OCI-LY7 (cell line): ENCODE measurements at regions of chr4 and their contacts with region 1.

Region 1: DNA sequence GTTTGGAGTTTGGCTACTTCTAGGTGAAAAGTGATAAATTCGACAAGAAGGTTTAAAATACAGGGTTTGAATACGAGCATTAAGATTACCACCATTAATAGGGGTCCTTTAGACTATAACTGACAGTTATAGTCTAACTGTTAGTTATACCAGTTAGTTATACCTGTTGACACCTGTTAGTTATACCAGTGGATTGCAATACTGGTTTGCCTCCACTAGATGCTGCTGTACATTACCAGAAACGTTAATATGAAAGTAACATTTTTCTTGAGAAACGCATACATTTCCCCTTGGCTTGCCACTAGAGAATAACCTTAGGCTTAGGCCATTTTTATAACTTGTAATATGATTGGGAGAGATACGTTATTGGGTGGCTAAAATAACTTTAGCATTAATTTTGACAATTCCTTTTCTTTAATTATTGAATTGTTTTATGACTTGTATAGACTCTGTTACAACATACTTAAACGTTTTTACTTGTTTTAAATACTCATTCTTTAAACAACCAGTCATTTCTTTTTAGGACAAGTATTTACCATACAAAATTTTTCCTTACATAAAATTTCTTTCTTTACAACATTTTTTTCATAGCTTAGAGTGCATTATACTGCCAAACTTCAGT is 911.2 kb downstream of the FSTL5 start:
- DNase-seq: peak; percentile 26
- H3K4me3 ChIP-seq: no peak overlapping the region
- H3K27ac ChIP-seq: no peak overlapping the region
- H3K4me1 ChIP-seq: no peaks in the 10 kb centered on the region
- CTCF ChIP-seq: peak; percentile 87

Region 2: GRCh38 chr4:162163852-162164759 is 911.5 kb after region 1 on chr4 and contains the start of gene FSTL5:
- CTCF ChIA-PET with region 1: no interaction called
- POLR2A ChIA-PET with region 1: no interaction called
- intact Hi-C with region 1: loop called (anchors 10 kb)
- DNase-seq: no peak
- H3K4me3 ChIP-seq: no peak within 1 kb of the TSS
- H3K27ac ChIP-seq: no peak within 1 kb of the TSS
- H3K4me1 ChIP-seq: no peaks in the 10 kb centered on the region
- CTCF ChIP-seq: no peak
- total RNA-seq, gene FSTL5: not detected in 2 replicates